Caco-2 (cell line): ENCODE measurements at regions of chr3 and their contacts with region 1.

Region 1: GRCh38 chr3:129160891-129161859 is at the start of gene ISY1:
- DNase-seq: peak; percentile 90 to 91
- H3K4me3 ChIP-seq: peak within 1 kb of the TSS; percentile 59
- H3K4me3 Mint-ChIP-seq: peak within 1 kb of the TSS; percentile 89
- H3K27ac Mint-ChIP-seq: peak within 1 kb of the TSS; percentile 99
- H3K4me1 ChIP-seq: peaks cover 15% of the 10 kb centered on the region
- H3K4me1 Mint-ChIP-seq: peaks cover 12% of the 10 kb centered on the region
- H3K27me3 ChIP-seq: no peaks in the 10 kb centered on the region
- H3K27me3 Mint-ChIP-seq: no peaks in the 10 kb centered on the region
- CTCF ChIP-seq: peak; percentile 59 to 87
- total RNA-seq, gene ISY1: 35.6 and 37.6 TPM in 2 replicates

Region 2: DNA sequence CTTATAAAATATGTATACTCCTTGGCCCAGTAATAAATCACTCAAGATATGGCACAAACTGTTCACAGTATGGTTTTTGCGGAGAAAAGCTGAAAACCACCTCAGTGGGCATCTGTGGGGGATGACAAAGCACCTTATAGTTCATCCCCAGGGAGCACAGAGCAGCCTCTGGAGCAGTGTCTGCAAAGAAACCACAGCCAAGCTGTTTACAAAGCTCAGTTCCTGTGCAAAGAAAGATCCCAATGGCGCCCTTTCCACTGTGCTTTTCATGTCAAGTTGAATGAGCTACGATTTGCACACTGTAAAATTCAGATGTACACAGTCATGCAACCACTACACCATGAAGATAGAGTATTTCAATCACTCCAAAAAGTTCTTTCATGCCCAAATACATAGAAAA is 162.6 kb before region 1 on chr3:
- CTCF ChIA-PET with region 1: no interaction called
- POLR2A ChIA-PET with region 1: no interaction called
- intact Hi-C with region 1: no loop called
- DNase-seq: no peak
- H3K4me3 ChIP-seq: no peak overlapping the region
- H3K4me3 Mint-ChIP-seq: no peak overlapping the region
- H3K27ac Mint-ChIP-seq: no peak overlapping the region
- H3K4me1 ChIP-seq: peaks cover 2% of the 10 kb centered on the region; the same call in 1 of the 2 replicates
- H3K4me1 Mint-ChIP-seq: peaks cover 13% of the 10 kb centered on the region
- H3K27me3 ChIP-seq: no peaks in the 10 kb centered on the region
- H3K27me3 Mint-ChIP-seq: no peaks in the 10 kb centered on the region
- CTCF ChIP-seq: no peak

Region 3: GRCh38 chr3:129052675-129053074 is 108.5 kb before region 1 on chr3:
- CTCF ChIA-PET with region 1: interaction called, 12 read pairs
- POLR2A ChIA-PET with region 1: interaction called, 4 read pairs
- intact Hi-C with region 1: loop called (anchors 1 kb)
- DNase-seq: no peak
- H3K4me3 ChIP-seq: no peak overlapping the region
- H3K4me3 Mint-ChIP-seq: peak overlapping the region; percentile 40
- H3K27ac Mint-ChIP-seq: peak overlapping the region; percentile 16
- H3K4me1 ChIP-seq: peaks cover 35% of the 10 kb centered on the region
- H3K4me1 Mint-ChIP-seq: peaks cover 16% of the 10 kb centered on the region
- H3K27me3 ChIP-seq: no peaks in the 10 kb centered on the region
- H3K27me3 Mint-ChIP-seq: no peaks in the 10 kb centered on the region
- CTCF ChIP-seq: no peak

Region 4: DNA sequence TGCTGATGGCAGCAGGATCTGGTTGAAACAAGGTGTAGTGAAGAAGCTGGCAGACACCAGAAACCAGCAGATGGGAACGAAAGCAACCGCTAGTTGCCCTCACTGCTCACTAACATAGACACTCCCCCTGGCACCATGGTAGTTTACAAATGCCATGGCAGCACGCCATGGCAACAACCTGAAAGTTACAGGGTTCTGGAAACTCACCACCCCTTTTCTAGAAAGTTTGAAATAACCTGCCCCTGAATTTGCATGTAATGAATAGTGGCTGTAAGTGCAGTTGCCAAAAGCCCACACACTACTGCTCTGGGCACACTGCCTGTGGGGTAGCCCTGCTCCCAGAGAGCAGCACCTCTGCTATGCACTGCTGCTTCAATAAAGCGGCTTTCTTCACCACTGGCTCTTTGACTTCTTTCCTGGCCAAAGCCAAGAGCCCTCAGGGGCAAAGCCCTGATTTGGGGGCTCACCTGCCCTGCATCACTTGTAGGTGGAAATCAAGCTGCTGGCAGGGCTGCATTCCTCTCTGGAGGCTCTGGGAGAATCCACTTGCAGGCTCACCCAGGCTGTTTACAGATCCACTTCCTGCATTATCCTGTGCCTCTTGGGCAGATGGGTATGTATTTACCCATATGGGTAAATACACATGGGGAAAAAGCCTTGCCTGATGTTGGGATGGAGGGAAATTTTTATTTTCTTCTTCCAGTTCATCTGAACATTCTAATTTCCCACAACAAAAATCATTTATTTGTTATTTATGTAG is 102.6 kb before region 1 on chr3:
- CTCF ChIA-PET with region 1: interaction called, 12 read pairs
- POLR2A ChIA-PET with region 1: interaction called, 4 read pairs
- intact Hi-C with region 1: loop called (anchors 1 kb)
- DNase-seq: no peak
- H3K4me3 ChIP-seq: no peak overlapping the region
- H3K4me3 Mint-ChIP-seq: no peak overlapping the region
- H3K27ac Mint-ChIP-seq: no peak overlapping the region
- H3K4me1 ChIP-seq: peaks cover 30% of the 10 kb centered on the region
- H3K4me1 Mint-ChIP-seq: peaks cover 16% of the 10 kb centered on the region
- H3K27me3 ChIP-seq: no peaks in the 10 kb centered on the region
- H3K27me3 Mint-ChIP-seq: no peaks in the 10 kb centered on the region
- CTCF ChIP-seq: no peak